Esophagus muscularis mucosa (tissue), 4 donors: ENCODE measurements at regions of chr7 and their contacts with region 1.

Region 1: GRCh38 chr7:108002726-108003598 is at the start of gene LAMB1:
- DNase-seq: no peak
- H3K4me3 ChIP-seq: peak within 1 kb of the TSS; percentile 80 to 86 (median 84)
- H3K27ac ChIP-seq: peak within 1 kb of the TSS; percentile 84 to 90 (median 89)
- H3K4me1 ChIP-seq: peaks cover 22 to 59% (median 53%) of the 10 kb centered on the region in 4 donors
- H3K27me3 ChIP-seq: no peaks in the 10 kb centered on the region
- CTCF ChIP-seq: no peak
- EP300 ChIP-seq: no peak
- POLR2A ChIP-seq: peak; percentile 78
- total RNA-seq, gene LAMB1: 167 to 240 (median 219) TPM

Region 2: DNA sequence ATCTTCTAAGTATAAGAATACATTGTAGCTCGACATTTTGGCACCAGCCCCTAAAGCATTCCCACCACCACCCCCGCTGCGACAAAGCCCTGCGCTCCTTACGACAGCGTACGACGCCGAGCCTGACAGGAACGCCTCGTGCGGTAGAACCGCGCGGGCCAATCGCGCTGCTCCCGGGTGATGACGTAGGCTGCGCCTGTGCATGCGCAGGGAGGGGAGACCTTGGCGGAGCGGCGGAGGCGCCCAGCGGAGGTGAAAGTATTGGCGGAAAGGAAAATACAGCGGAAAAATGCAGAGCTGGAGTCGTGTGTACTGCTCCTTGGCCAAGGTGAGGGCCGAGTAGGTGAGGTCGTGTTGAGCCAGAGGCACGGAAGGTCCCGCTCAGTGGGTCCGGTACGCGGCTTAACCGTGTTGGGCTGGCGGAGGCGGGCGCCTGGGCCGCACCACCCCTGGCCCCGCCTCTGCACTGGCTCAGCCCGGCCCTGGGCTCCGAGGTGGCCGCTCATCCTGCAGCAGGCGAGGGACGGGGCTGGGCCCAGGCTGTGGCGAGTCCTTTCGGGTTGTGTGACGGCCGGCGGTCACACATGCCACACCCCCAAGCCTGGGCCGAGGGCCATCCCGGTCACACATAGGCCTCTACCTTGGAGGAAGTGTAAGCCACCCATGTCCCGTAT is 111.9 kb before region 1 on chr7 and contains the start of gene DLD:
- intact Hi-C with region 1: loop called (anchors 5 kb)
- DNase-seq: peak; percentile 98
- H3K4me3 ChIP-seq: peak within 1 kb of the TSS; percentile 73 to 87 (median 74)
- H3K27ac ChIP-seq: peak within 1 kb of the TSS; percentile 93 to 95 (median 94)
- H3K4me1 ChIP-seq: peaks cover 34 to 56% (median 53%) of the 10 kb centered on the region in 4 donors
- H3K27me3 ChIP-seq: peaks cover 0 to 2% (median 0%) of the 10 kb centered on the region in 4 donors
- CTCF ChIP-seq: no peak
- EP300 ChIP-seq: peak; percentile 45
- POLR2A ChIP-seq: peak; percentile 88
- total RNA-seq, gene DLD: 99.9 to 135 (median 119) TPM

Region 3: GRCh38 chr7:107924841-107925504 is 78.0 kb before region 1 on chr7:
- intact Hi-C with region 1: loop called (anchors 5 kb)
- DNase-seq: no peak
- H3K4me3 ChIP-seq: no peak overlapping the region
- H3K27ac ChIP-seq: peak overlapping the region in 3 of 4 donors; percentile 24 to 65 (median 34)
- H3K4me1 ChIP-seq: peaks cover 7 to 45% (median 36%) of the 10 kb centered on the region in 4 donors
- H3K27me3 ChIP-seq: no peaks in the 10 kb centered on the region
- CTCF ChIP-seq: no peak
- EP300 ChIP-seq: no peak
- POLR2A ChIP-seq: no peak

Region 4: GRCh38 chr7:108094933-108095710 is 92.2 kb after region 1 on chr7:
- intact Hi-C with region 1: loop called (anchors 5 kb)
- DNase-seq: no peak
- H3K4me3 ChIP-seq: no peak overlapping the region
- H3K27ac ChIP-seq: peak overlapping the region; percentile 54 to 79 (median 62)
- H3K4me1 ChIP-seq: peaks cover 19 to 52% (median 42%) of the 10 kb centered on the region in 4 donors
- H3K27me3 ChIP-seq: no peaks in the 10 kb centered on the region
- CTCF ChIP-seq: no peak
- EP300 ChIP-seq: no peak
- POLR2A ChIP-seq: no peak

Region 5: GRCh38 chr7:108146070-108146837 is 143.3 kb after region 1 on chr7:
- intact Hi-C with region 1: loop called (anchors 10 kb)
- DNase-seq: no peak
- H3K4me3 ChIP-seq: peak overlapping the region; percentile 12 to 46 (median 31)
- H3K27ac ChIP-seq: peak overlapping the region in 2 of 4 donors; percentile 63 to 65
- H3K4me1 ChIP-seq: peaks cover 6 to 44% (median 38%) of the 10 kb centered on the region in 4 donors
- H3K27me3 ChIP-seq: no peaks in the 10 kb centered on the region
- CTCF ChIP-seq: peak; percentile 86 to 95 (median 92)
- EP300 ChIP-seq: no peak
- POLR2A ChIP-seq: no peak